ENCODE measurements at regions of chr14 and their contacts with region 1.

Region 1: DNA sequence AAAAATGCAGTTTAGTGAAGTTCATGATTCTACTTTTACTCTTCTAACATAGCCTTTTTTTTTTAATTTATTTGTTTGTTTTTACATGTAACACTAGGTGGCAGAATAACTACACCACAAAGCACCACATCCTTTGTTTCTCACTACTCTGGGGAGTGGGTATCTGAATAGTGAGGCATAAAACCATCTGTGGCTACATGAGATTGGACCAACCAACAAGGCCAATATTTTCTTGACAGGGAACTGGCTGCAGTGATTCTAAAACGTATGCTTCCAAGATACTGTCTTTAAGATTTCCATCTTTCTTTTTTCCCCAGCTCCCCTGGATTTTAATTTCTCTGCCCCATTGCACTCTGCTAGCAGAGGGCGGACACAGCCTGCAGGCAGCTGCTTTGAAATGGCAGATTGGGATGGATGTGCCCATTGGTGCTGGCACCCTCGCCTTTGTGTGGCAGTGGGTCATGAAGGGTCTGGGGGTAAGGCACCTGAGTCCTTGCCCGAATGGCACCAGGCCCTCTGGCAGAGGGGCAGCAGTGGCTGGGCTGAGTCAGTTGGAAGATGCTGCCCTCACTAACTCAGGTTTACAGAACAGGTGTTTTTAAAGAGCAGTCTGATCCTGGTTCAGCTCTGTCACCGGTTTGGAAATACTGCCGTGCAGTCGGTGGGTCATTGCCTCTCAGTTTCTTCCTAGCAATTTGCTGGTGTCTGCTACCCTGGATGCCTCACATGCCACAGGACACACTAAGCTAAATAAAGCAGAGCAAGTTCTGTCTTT is 429.1 kb downstream of the RAD51B start:
- DNase-seq: peak; percentile 62 to 84
- ATAC-seq: peak; percentile 79 to 85
- H3K4me3 ChIP-seq: no peak overlapping the region
- H3K27ac ChIP-seq: peak overlapping the region; percentile 82 to 87 (median 86)
- H3K4me1 ChIP-seq: peaks cover 64 to 84% of the 10 kb centered on the region in 2 donors
- H3K27me3 ChIP-seq: no peaks in the 10 kb centered on the region
- CTCF ChIP-seq: peak; percentile 60 to 79 (median 70)
- POLR2A ChIP-seq: peak; percentile 10 to 31

Region 2: GRCh38 chr14:67943947-67944346 is 304.7 kb before region 1 on chr14:
- in situ Hi-C with region 1: loop called (anchors 5 to 25 kb)
- intact Hi-C with region 1: loop called (anchors 2 kb)
- DNase-seq: peak; percentile 46 to 51
- ATAC-seq: peak; percentile 75 to 81
- H3K4me3 ChIP-seq: no peak overlapping the region
- H3K27ac ChIP-seq: peak overlapping the region in 1 of 4 donors; percentile 20
- H3K4me1 ChIP-seq: peaks cover 20 to 29% of the 10 kb centered on the region in 2 donors
- H3K27me3 ChIP-seq: no peaks in the 10 kb centered on the region
- CTCF ChIP-seq: peak; percentile 64 to 78 (median 75)
- POLR2A ChIP-seq: no peak

Region 3: DNA sequence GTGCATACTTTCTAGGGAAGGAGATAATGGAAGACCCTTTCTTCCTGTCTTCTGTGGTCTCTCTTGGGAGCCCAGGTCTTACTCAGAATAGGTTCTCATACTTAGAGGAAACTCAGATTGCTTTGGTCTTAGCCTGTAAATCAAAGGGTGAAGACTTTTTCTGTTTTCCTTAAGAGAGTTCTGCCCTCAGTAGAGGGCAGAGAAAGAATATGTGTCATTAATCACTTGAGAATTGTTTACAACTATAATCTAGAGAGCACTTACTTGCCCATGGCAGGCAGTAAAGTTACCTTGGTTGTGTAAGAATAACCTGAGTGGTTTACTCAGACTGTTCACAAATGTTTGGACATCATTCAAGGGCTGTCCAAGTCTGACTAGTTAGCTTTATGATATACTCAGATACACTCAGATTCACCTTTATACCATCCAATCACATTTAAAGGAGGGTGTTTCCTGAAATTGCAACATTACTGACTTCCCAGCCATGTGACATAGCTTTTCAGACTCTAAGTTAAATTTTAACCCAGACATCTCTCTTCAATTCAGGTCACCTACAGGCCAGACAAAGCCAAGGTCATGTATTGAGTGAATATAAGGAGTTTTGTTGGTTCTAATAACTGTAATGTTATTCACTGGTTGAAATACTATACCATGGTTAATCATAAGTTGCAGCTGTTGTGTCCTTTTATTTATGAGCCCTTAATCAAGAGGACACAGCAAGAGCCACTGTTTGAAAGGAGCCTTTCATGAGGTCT is 56.9 kb before region 1 on chr14:
- in situ Hi-C with region 1: no loop called
- intact Hi-C with region 1: loop called (anchors 2 kb)
- DNase-seq: peak; percentile 15 to 48
- ATAC-seq: peak; percentile 96 to 98
- H3K4me3 ChIP-seq: no peak overlapping the region
- H3K27ac ChIP-seq: peak overlapping the region; percentile 75 to 83 (median 78)
- H3K4me1 ChIP-seq: peaks cover 30 to 34% of the 10 kb centered on the region in 2 donors
- H3K27me3 ChIP-seq: no peaks in the 10 kb centered on the region
- CTCF ChIP-seq: no peak
- POLR2A ChIP-seq: no peak

Region 4: GRCh38 chr14:68359837-68360552 is 111.3 kb after region 1 on chr14:
- in situ Hi-C with region 1: no loop called
- intact Hi-C with region 1: no loop called
- DNase-seq: peak; percentile 20 to 42
- ATAC-seq: peak in 1 of 2 donors; percentile 62
- H3K4me3 ChIP-seq: no peak overlapping the region
- H3K27ac ChIP-seq: peak overlapping the region in 2 of 4 donors; percentile 2 to 33
- H3K4me1 ChIP-seq: no peaks in the 10 kb centered on the region
- H3K27me3 ChIP-seq: no peaks in the 10 kb centered on the region
- CTCF ChIP-seq: no peak
- POLR2A ChIP-seq: no peak

Region 5: GRCh38 chr14:68548194-68549056 is 299.8 kb after region 1 on chr14:
- in situ Hi-C with region 1: no loop called
- intact Hi-C with region 1: loop called (anchors 5 kb)
- DNase-seq: peak; percentile 87 to 93
- ATAC-seq: peak; percentile 36 to 52
- H3K4me3 ChIP-seq: peak overlapping the region in 2 of 4 donors; percentile 8 to 18
- H3K27ac ChIP-seq: peak overlapping the region; percentile 93 to 99 (median 97)
- H3K4me1 ChIP-seq: peaks cover 69 to 97% of the 10 kb centered on the region in 2 donors
- H3K27me3 ChIP-seq: no peaks in the 10 kb centered on the region
- CTCF ChIP-seq: no peak
- POLR2A ChIP-seq: peak; percentile 67 to 76

Region 6: DNA sequence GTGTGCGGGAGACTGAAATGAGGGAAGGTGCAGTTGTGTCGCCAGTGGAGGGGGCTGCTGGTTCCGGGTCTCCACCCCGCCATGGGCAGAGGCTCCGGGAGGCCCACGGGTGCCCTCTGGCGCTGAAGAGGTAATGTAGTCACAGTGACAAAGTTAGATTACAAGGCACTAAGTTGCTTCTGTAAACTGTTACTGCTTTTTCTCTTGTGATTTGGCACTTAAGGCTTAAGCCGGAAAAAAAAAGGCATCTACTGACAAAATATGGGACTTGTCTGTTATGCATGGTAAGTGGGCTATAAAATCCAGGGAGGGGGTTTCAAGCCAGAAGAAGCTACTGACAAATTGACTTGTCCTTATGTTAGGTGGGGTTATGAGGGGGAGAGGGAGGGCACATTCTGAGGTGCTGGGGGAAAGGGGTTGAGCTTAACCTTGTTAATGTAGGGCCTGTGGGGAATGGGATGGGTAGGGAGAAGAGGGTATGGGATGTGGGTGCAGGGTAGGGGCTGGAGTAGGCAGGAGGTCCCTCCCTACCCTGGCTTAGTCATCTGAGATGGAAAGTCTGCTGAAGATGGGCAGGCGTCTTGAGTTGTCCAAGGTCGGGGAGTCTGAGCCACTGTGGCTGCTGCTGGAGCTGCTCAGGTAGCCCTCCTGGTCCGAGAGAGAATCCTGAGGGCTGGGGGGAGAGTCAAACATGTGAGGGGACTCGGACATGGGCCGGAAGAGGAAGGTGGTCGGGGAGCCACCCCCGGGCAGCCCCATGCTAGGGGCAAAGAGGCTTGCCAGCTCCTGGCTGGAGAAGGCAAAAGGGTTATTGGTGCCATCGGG is 540.5 kb after region 1 on chr14:
- in situ Hi-C with region 1: loop called in 3 of 4 experiments (anchors 5 to 10 kb)
- intact Hi-C with region 1: loop called (anchors 1 kb)
- DNase-seq: peak; percentile 73 to 88
- ATAC-seq: peak in 1 of 2 donors; percentile 32
- H3K4me3 ChIP-seq: peak overlapping the region; percentile 72 to 90 (median 82)
- H3K27ac ChIP-seq: peak overlapping the region; percentile 97 to 100 (median 98)
- H3K4me1 ChIP-seq: peaks cover 13 to 25% of the 10 kb centered on the region in 2 donors
- H3K27me3 ChIP-seq: no peaks in the 10 kb centered on the region
- CTCF ChIP-seq: peak; percentile 54 to 75 (median 69)
- POLR2A ChIP-seq: peak in 1 of 2 donors; percentile 23

Region 7: DNA sequence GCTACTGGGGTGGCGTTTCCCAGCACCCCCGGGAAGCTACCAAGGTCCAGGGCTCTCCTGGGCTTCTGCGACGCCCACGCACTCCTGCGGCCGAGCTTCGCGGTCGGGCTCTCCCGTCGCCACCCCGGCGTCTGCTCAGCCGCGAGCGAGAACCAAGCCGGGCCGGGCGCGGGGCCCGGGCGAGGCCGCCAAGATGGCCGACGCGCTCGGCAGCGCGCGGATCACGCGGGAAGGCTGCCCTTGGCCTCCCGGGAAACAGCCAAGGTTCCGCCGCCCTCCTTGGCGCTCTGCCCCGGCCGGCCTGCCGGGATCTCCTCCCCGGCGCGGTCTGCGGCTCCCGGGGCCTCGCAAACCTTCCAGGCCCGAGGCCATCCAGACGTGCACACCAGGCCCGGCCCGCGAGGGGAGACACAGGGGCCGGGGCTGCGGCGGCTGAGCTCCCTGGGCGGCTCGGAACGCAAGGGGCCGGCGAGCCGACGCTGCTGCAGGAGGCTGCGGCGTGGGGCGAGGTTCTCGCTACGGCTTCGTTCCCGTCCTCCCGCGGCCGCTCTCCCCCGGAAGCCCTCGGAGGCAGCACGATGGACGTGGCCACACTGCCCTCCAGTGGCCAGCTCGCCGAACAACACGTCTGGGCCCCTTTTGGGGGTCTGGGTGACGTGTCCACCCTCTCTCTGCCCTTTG is 567.7 kb after region 1 on chr14:
- in situ Hi-C with region 1: loop called in 2 of 4 experiments (anchors 5 to 10 kb)
- intact Hi-C with region 1: loop called (anchors 1 kb)
- DNase-seq: peak; percentile 81 to 85
- ATAC-seq: peak; percentile 86 to 91
- H3K4me3 ChIP-seq: peak overlapping the region; percentile 55 to 84 (median 75)
- H3K27ac ChIP-seq: peak overlapping the region; percentile 94 to 100 (median 96)
- H3K4me1 ChIP-seq: peaks cover 34 to 36% of the 10 kb centered on the region in 2 donors
- H3K27me3 ChIP-seq: no peaks in the 10 kb centered on the region
- CTCF ChIP-seq: peak; percentile 97 to 100 (median 98)
- POLR2A ChIP-seq: peak; percentile 51 to 65

Measured in gastrocnemius medialis (tissue), 4 donors.